IMR-90 (cell line): ENCODE measurements at regions of chr20 and their contacts with region 1.

Region 1: GRCh38 chr20:5749952-5750779 is at the start of gene SHLD1:
- DNase-seq: peak; percentile 88
- ATAC-seq: peak; percentile 97
- H3K4me3 ChIP-seq: peak within 1 kb of the TSS; percentile 45
- H3K27ac ChIP-seq: peak within 1 kb of the TSS; percentile 95
- H3K4me1 ChIP-seq: peaks cover 3% of the 10 kb centered on the region; the same call in 1 of the 2 replicates
- H3K27me3 ChIP-seq: no peaks in the 10 kb centered on the region
- CTCF ChIP-seq: no peak
- POLR2A ChIP-seq: peak; percentile 56; the same call in 1 of the 2 replicates
- RAD21 ChIP-seq: no peak
- total RNA-seq, gene SHLD1: 1.9 and 3.0 TPM in 2 replicates

Region 2: DNA sequence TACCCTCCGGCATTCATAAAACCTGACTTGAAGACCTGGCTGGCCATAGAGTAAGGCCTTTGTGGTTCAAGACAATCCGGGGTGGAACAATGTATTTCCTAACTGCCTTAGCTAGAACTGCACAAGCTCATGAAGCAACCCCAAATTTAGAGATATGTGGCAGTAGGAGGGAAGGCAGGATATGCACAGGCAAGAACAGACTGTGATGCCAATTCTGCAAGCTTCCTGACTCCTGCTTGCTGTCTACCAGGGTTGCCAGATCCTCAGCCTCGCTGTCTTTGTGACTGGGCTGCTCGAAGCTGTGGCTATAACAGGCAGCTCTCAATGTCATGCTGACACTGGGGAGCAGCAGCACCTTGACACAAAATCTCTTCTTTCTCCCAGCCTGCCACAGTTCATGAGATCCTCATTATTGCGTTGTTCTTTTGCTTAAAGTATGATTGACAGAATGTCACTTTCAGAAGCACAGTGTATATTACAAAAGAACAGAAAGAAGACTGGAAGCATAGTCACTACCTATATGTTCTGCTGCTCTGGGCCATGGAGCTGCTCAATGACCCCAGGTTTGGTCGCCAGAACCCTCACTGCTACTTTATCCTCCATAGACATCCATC is 18.3 kb before region 1 on chr20:
- CTCF ChIA-PET with region 1: no interaction called
- POLR2A ChIA-PET with region 1: no interaction called
- dilution Hi-C with region 1: no loop called
- in situ Hi-C with region 1: no loop called
- intact Hi-C with region 1: no loop called
- DNase-seq: no peak
- ATAC-seq: no peak
- H3K4me3 ChIP-seq: no peak overlapping the region
- H3K27ac ChIP-seq: no peak overlapping the region
- H3K4me1 ChIP-seq: peaks cover 16% of the 10 kb centered on the region
- H3K27me3 ChIP-seq: peaks cover 3% of the 10 kb centered on the region; the same call in 1 of the 2 replicates
- CTCF ChIP-seq: no peak
- POLR2A ChIP-seq: no peak
- RAD21 ChIP-seq: no peak

Region 3: GRCh38 chr20:5766085-5766764 is 16.1 kb after region 1 on chr20:
- CTCF ChIA-PET with region 1: no interaction called
- POLR2A ChIA-PET with region 1: no interaction called
- dilution Hi-C with region 1: no loop called
- in situ Hi-C with region 1: no loop called
- intact Hi-C with region 1: loop called (anchors 1 kb)
- DNase-seq: no peak
- ATAC-seq: no peak
- H3K4me3 ChIP-seq: no peak overlapping the region
- H3K27ac ChIP-seq: no peak overlapping the region
- H3K4me1 ChIP-seq: no peaks in the 10 kb centered on the region
- H3K27me3 ChIP-seq: no peaks in the 10 kb centered on the region
- CTCF ChIP-seq: no peak
- POLR2A ChIP-seq: no peak
- RAD21 ChIP-seq: no peak

Region 4: GRCh38 chr20:5779071-5779900 is 29.1 kb after region 1 on chr20:
- CTCF ChIA-PET with region 1: no interaction called
- POLR2A ChIA-PET with region 1: no interaction called
- dilution Hi-C with region 1: no loop called
- in situ Hi-C with region 1: no loop called
- intact Hi-C with region 1: no loop called
- DNase-seq: peak; percentile 56
- ATAC-seq: peak; percentile 60
- H3K4me3 ChIP-seq: no peak overlapping the region
- H3K27ac ChIP-seq: no peak overlapping the region
- H3K4me1 ChIP-seq: peaks cover 6% of the 10 kb centered on the region
- H3K27me3 ChIP-seq: no peaks in the 10 kb centered on the region
- CTCF ChIP-seq: no peak
- POLR2A ChIP-seq: no peak
- RAD21 ChIP-seq: no peak